MCF 10A (cell line): ENCODE measurements at regions of chr19 and their contacts with region 1.

Region 1: DNA sequence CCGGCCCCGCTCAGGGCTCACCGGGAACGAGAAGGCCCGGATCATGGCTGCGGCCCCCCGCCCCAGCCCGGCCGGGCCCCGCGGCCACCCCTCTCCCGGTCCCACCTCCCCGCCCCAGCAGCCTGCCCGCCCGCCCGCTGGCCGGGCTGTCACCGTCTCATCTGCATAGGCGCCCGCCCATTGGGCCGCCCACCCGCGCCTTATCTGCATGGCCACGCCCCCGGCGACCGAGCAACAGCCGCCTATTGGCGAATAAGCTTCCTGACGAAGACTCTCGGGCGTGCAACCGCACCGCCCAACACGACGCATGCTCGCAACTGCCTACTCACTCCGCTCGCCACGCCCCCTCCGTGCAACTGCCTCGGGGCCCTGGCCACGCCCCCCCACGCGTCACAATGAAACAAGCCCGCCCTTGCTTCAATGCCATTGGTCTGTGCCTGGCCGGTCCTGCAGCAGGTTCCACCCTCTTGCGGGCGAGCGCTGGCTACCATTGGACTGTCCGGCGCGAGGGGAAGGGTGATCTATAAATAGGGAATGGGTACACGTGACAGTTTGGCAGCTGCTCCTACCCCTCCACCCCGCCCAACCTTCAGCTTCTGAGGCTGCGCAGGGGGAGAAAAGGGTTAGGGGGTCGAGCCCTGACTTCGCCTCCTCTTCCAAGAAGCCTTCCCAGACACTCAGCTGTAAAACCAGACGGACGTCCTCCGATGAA is at the start of gene DACT3:
- DNase-seq: peak; percentile 100
- H3K4me3 Mint-ChIP-seq: peak within 1 kb of the TSS; percentile 63
- H3K27ac Mint-ChIP-seq: peak within 1 kb of the TSS; percentile 39
- H3K4me1 Mint-ChIP-seq: peaks cover 7% of the 10 kb centered on the region
- H3K27me3 Mint-ChIP-seq: peaks cover 41% of the 10 kb centered on the region
- CTCF ChIP-seq: no peak
- total RNA-seq, gene DACT3: 0.09 TPM in 1 of 2 replicates, not detected in the other

Region 2: DNA sequence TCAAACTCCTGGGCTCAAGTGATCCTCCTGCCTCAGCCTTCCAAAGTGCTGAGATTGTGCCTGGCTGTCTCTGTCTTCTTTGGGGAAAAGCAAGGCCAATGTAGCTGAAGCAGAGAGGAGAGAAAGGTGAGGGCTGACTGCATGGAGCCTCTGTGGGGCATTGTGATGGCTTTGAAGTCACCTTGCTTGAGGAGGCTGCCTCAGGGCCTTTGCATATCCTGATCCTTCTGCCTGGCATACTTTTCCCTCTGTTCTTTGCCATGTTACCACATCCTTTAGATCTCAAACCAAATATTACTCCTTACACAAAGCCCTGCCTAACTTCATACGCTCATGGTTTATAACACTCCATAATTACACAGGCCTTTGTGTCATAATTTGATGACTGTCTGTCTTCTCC is 323.7 kb before region 1 on chr19:
- CTCF ChIA-PET with region 1: no interaction called
- POLR2A ChIA-PET with region 1: no interaction called
- intact Hi-C with region 1: no loop called
- DNase-seq: no peak
- H3K4me3 Mint-ChIP-seq: no peak overlapping the region
- H3K27ac Mint-ChIP-seq: no peak overlapping the region
- H3K4me1 Mint-ChIP-seq: no peaks in the 10 kb centered on the region
- H3K27me3 Mint-ChIP-seq: no peaks in the 10 kb centered on the region
- CTCF ChIP-seq: no peak

Region 3: GRCh38 chr19:46489445-46490272 is 171.5 kb before region 1 on chr19:
- CTCF ChIA-PET with region 1: no interaction called
- POLR2A ChIA-PET with region 1: no interaction called
- intact Hi-C with region 1: no loop called
- DNase-seq: no peak
- H3K4me3 Mint-ChIP-seq: no peak overlapping the region
- H3K27ac Mint-ChIP-seq: no peak overlapping the region
- H3K4me1 Mint-ChIP-seq: no peaks in the 10 kb centered on the region
- H3K27me3 Mint-ChIP-seq: peaks cover 14% of the 10 kb centered on the region
- CTCF ChIP-seq: no peak

Region 4: DNA sequence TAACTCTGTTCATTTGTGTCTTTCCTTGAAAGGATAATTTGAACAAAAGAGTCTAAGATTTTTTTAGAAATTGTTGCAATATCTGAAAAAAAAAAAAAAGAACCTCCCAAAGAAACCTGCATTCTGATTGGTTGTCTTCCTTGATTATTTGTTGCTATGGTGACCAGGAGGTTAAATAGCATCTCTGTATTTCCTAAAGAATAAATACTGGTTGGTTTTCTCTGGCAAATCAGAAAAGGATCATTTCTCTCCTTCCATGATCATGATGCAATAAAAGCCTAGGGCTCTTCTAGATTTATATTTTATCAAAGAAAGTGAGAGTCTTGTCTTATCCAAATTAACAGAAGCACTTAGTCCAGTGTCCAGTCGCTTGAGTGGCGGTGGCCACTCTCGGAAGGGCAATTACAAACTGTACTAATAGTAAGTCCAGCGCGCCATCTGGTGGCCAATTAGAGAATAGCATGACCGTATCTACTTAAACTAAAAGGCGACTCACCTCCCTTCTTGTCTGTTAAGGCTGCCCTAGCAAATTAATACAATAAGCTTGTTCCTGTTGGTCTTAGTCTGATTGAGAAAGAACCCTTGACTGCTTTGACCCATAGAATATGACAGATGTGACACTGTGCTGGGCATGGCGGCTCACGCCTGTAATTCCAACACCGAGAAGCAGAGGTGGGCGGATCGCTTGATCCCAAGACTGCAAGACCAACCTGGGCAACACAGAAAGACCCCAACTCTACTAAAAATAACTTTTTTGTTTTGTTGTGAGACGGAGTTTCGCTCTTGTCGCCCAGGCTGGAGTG is 118.5 kb before region 1 on chr19:
- CTCF ChIA-PET with region 1: interaction called, 6 read pairs
- POLR2A ChIA-PET with region 1: no interaction called
- intact Hi-C with region 1: loop called (anchors 5 kb)
- DNase-seq: peak; percentile 93
- H3K4me3 Mint-ChIP-seq: no peak overlapping the region
- H3K27ac Mint-ChIP-seq: no peak overlapping the region
- H3K4me1 Mint-ChIP-seq: no peaks in the 10 kb centered on the region
- H3K27me3 Mint-ChIP-seq: no peaks in the 10 kb centered on the region
- CTCF ChIP-seq: peak; percentile 86

Region 5: DNA sequence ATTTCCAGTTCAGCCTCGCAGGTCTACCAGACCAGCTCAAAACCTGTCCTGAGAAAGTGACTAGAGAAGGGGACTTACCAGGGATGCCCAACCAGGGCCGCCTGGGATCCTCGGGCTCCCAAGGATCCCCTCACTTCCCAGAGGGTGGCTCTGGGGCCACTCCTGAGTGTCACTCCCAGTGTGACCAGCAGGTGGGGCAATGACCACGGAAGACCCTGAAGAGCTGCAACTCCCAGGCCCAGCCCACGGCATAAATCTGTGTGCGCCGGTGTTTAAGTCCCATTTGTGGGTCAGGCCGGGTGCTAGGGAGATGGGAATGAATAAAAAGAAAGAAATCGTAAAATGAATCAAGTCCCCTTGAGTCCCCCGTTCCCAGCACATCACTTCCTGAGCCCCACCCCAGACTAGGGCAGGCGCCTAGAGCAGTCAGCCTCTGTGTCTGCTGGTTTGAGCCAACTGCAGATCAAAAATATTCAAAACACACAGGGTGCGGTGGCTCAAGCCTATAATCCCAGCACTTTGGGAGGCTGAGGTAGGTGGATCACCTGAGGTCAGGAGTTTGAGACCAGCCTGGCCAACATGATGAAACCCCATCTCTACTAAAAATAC is 47.0 kb before region 1 on chr19:
- CTCF ChIA-PET with region 1: interaction called, 101 read pairs
- POLR2A ChIA-PET with region 1: interaction called, 23 read pairs
- intact Hi-C with region 1: loop called (anchors 1 kb)
- DNase-seq: peak; percentile 80
- H3K4me3 Mint-ChIP-seq: no peak overlapping the region
- H3K27ac Mint-ChIP-seq: no peak overlapping the region
- H3K4me1 Mint-ChIP-seq: peaks cover 7% of the 10 kb centered on the region
- H3K27me3 Mint-ChIP-seq: no peaks in the 10 kb centered on the region
- CTCF ChIP-seq: peak; percentile 82

Region 6: GRCh38 chr19:46678110-46678732 is 17.0 kb after region 1 on chr19:
- CTCF ChIA-PET with region 1: interaction called, 14 read pairs
- POLR2A ChIA-PET with region 1: interaction called, 6 read pairs
- intact Hi-C with region 1: no loop called
- DNase-seq: peak; percentile 43
- H3K4me3 Mint-ChIP-seq: no peak overlapping the region
- H3K27ac Mint-ChIP-seq: no peak overlapping the region
- H3K4me1 Mint-ChIP-seq: no peaks in the 10 kb centered on the region
- H3K27me3 Mint-ChIP-seq: no peaks in the 10 kb centered on the region
- CTCF ChIP-seq: no peak